Thyroid gland (tissue), 4 donors: ENCODE measurements at regions of chr15 and their contacts with region 1.

Region 1: GRCh38 chr15:39786447-39787056 is 3.9 kb upstream of the FSIP1 start:
- DNase-seq: no peak
- H3K4me3 ChIP-seq: no peak overlapping the region
- H3K27ac ChIP-seq: no peak overlapping the region
- H3K4me1 ChIP-seq: peaks cover 10% of the 10 kb centered on the region in 2 donors
- H3K27me3 ChIP-seq: no peaks in the 10 kb centered on the region
- CTCF ChIP-seq: peak in 5 of 6 experiments; percentile 31 to 70 (median 60)
- POLR2A ChIP-seq: no peak

Region 2: GRCh38 chr15:39248204-39248603 is 538.3 kb before region 1 on chr15:
- intact Hi-C with region 1: no loop called
- DNase-seq: peak; percentile 94 to 97
- H3K4me3 ChIP-seq: no peak overlapping the region
- H3K27ac ChIP-seq: peak overlapping the region; percentile 53 to 71 (median 54)
- H3K4me1 ChIP-seq: peaks cover 16 to 26% of the 10 kb centered on the region in 2 donors
- H3K27me3 ChIP-seq: no peaks in the 10 kb centered on the region
- CTCF ChIP-seq: no peak
- POLR2A ChIP-seq: no peak

Region 3: GRCh38 chr15:39680868-39681267 is 105.7 kb before region 1 on chr15:
- intact Hi-C with region 1: no loop called
- DNase-seq: no peak
- H3K4me3 ChIP-seq: no peak overlapping the region
- H3K27ac ChIP-seq: no peak overlapping the region
- H3K4me1 ChIP-seq: no peaks in the 10 kb centered on the region
- H3K27me3 ChIP-seq: no peaks in the 10 kb centered on the region
- CTCF ChIP-seq: no peak
- POLR2A ChIP-seq: no peak

Region 4: GRCh38 chr15:39976291-39977274 is 190.0 kb after region 1 on chr15:
- intact Hi-C with region 1: loop called (anchors 5 kb)
- DNase-seq: peak; percentile 88
- H3K4me3 ChIP-seq: peak overlapping the region; percentile 3 to 47 (median 7)
- H3K27ac ChIP-seq: peak overlapping the region; percentile 66 to 79 (median 76)
- H3K4me1 ChIP-seq: peaks cover 4 to 5% of the 10 kb centered on the region in 2 donors
- H3K27me3 ChIP-seq: no peaks in the 10 kb centered on the region
- CTCF ChIP-seq: peak in 5 of 6 experiments; percentile 19 to 76 (median 47)
- POLR2A ChIP-seq: peak in 1 of 2 donors; percentile 45